Gastrocnemius medialis (tissue), 4 donors: ENCODE measurements at regions of chr19 and their contacts with region 1.

Region 1: GRCh38 chr19:34145741-34146202 is 26.5 kb upstream of the LSM14A start:
- DNase-seq: no peak
- ATAC-seq: peak in 1 of 2 donors; percentile 39
- H3K4me3 ChIP-seq: no peak overlapping the region
- H3K27ac ChIP-seq: no peak overlapping the region
- H3K4me1 ChIP-seq: no peaks in the 10 kb centered on the region
- H3K27me3 ChIP-seq: no peaks in the 10 kb centered on the region
- CTCF ChIP-seq: peak; percentile 66 to 81 (median 76)
- POLR2A ChIP-seq: no peak

Region 2: DNA sequence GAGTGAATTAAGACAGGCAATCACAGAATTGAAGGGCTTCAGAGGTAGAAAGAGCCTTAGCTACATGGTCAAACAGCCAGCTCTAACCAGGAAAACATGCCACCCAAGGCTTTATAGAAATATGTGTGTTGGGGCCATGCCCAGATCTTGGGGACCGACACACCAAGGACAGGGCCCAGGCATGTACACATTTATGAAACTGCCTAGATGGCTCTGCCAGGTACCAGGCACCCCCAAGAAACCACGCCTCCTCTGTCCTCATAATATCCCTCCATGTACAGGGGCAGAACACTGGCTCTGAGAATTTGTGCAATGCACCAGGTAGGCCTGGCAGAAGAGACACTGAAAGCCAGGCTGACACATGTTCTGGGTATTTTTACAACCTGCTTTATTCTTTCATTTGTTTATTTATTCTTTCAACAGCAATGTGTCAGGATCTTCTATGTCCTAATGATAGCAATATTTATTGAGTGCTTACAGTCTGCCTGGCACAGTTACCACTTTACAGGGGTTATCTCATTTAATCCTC is 111.4 kb before region 1 on chr19:
- in situ Hi-C with region 1: loop called in 1 of 4 experiments (anchors 10 kb)
- intact Hi-C with region 1: no loop called
- DNase-seq: no peak
- ATAC-seq: no peak
- H3K4me3 ChIP-seq: no peak overlapping the region
- H3K27ac ChIP-seq: no peak overlapping the region
- H3K4me1 ChIP-seq: no peaks in the 10 kb centered on the region
- H3K27me3 ChIP-seq: no peaks in the 10 kb centered on the region
- CTCF ChIP-seq: no peak
- POLR2A ChIP-seq: no peak

Region 3: GRCh38 chr19:34041925-34042521 is 103.7 kb before region 1 on chr19:
- in situ Hi-C with region 1: loop called in 2 of 4 experiments (anchors 10 kb)
- intact Hi-C with region 1: loop called (anchors 1 kb)
- DNase-seq: peak in 1 of 2 donors; percentile 14
- ATAC-seq: no peak
- H3K4me3 ChIP-seq: no peak overlapping the region
- H3K27ac ChIP-seq: no peak overlapping the region
- H3K4me1 ChIP-seq: no peaks in the 10 kb centered on the region
- H3K27me3 ChIP-seq: no peaks in the 10 kb centered on the region
- CTCF ChIP-seq: peak; percentile 30 to 70 (median 54)
- POLR2A ChIP-seq: no peak

Region 4: GRCh38 chr19:34171877-34172660 is 26.3 kb after region 1 on chr19 and contains the start of gene LSM14A:
- in situ Hi-C with region 1: no loop called
- intact Hi-C with region 1: no loop called
- DNase-seq: peak; percentile 79 to 89
- ATAC-seq: peak; percentile 91 to 93
- H3K4me3 ChIP-seq: peak within 1 kb of the TSS; percentile 87 to 94 (median 90)
- H3K27ac ChIP-seq: peak within 1 kb of the TSS; percentile 94 to 98 (median 98)
- H3K4me1 ChIP-seq: peaks cover 43 to 44% of the 10 kb centered on the region in 2 donors
- H3K27me3 ChIP-seq: no peaks in the 10 kb centered on the region
- CTCF ChIP-seq: peak in 1 of 5 experiments; percentile 30
- POLR2A ChIP-seq: peak; percentile 82 to 89
- total RNA-seq, gene LSM14A: 104 to 120 (median 115) TPM